PC-9 (cell line): ENCODE measurements at regions of chr6 and their contacts with region 1.

Region 1: DNA sequence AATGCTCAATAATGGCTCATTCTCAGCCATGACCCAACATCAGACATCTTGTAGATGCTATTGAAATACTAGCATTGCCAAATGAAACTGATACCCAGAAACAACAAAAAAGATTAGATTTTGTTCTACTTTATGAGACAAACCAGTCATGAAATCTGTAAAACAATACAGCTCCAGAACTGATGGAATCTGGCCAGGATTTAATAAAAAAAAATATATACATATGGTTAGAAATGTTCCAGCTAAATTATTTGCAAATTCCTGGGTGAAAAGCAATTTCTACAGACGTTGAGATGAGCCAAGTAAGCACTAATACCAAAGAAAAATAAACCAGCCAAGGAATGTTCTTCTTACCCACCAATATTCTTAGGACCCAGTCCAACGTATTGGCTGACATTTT is 201.3 kb downstream of the EPHA7 start:
- DNase-seq: no peak
- H3K4me3 ChIP-seq: no peak overlapping the region
- H3K27ac ChIP-seq: no peak overlapping the region
- H3K4me1 ChIP-seq: no peaks in the 10 kb centered on the region
- H3K27me3 ChIP-seq: no peaks in the 10 kb centered on the region
- CTCF ChIP-seq: no peak

Region 2: GRCh38 chr6:93048381-93048780 is 169.7 kb before region 1 on chr6:
- CTCF ChIA-PET with region 1: interaction called, 15 read pairs
- POLR2A ChIA-PET with region 1: no interaction called
- intact Hi-C with region 1: no loop called
- DNase-seq: no peak
- H3K4me3 ChIP-seq: no peak overlapping the region
- H3K27ac ChIP-seq: no peak overlapping the region
- H3K4me1 ChIP-seq: no peaks in the 10 kb centered on the region
- H3K27me3 ChIP-seq: no peaks in the 10 kb centered on the region
- CTCF ChIP-seq: no peak

Region 3: DNA sequence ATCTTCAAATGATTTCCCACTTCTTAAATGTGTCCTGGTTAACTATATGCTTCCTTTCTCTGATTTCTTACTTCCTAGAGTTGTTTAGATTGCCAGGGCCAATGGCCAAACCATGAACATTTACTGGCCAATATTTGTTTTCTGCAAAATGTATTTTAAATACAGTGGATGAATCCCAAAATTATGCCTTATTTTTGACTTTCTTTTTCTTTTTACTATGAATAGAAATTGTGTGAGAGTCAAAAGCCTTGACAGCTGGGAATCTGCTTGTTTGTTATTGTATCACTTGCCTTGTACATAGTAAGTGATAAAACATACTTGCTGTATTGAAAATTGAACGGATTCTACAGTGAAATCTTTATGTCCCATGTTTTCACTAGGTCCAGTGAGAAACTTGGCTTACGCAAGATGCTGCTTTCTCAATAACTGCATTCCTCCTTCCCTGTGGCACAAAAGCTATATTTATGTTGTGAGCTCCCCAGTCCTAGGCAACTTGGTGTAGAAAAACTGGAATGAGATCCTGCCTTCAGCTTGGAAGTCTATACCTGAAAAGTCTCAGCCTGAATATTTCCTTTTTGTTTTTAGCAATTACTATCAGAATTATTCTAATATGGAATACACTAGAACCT is 94.0 kb before region 1 on chr6:
- CTCF ChIA-PET with region 1: no interaction called
- POLR2A ChIA-PET with region 1: no interaction called
- intact Hi-C with region 1: no loop called
- DNase-seq: no peak
- H3K4me3 ChIP-seq: no peak overlapping the region
- H3K27ac ChIP-seq: no peak overlapping the region
- H3K4me1 ChIP-seq: no peaks in the 10 kb centered on the region
- H3K27me3 ChIP-seq: no peaks in the 10 kb centered on the region
- CTCF ChIP-seq: no peak